Endothelial cell of umbilical vein (primary cell): ENCODE measurements at regions of chr18 and their contacts with region 1.

Region 1: DNA sequence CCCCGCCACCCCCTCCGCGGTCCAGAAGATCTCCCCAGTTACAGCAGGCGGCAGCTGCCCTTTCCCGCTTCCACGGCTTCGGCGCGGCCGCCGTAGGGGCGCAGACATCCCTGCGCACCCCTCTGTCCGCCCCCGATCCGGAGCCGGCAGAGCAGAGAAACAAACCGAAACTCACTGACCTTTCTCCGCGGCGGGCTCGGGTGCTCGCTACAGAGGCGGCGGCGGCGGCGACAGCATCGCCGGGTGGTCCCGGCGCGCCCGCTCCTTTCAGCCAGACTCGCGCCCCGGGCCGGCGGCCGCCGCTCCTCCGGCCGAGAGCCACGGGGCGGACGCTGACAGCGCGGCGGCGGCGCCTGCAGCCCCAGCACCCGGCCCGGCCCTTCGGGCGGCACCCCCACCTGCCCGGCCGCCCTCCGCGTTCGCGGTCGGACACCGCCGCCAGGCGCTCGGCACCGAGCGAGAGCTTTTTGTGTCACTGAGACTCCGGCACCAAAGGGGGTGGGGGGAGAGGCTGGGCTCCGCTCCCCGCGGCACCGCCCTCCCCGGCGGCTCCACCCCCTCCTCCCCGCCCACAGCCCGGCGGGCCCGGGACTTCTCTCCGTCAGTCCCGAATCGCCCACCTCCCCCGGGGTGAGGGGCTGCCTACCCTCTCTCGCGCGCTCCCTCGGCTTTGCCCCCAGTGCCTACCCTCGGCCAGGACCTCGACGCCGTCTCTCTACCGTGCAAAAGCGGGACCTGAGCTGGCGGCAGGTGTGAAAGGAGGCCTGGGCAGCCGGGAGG is 1.4 kb upstream of the RNF152 start:
- DNase-seq: peak; percentile 82
- H3K4me3 ChIP-seq: peak overlapping the region; percentile 83 to 98 (median 87)
- H3K27ac ChIP-seq: peak overlapping the region; percentile 67
- H3K4me1 ChIP-seq: peaks cover 21% of the 10 kb centered on the region
- H3K27me3 ChIP-seq: no peaks in the 10 kb centered on the region
- CTCF ChIP-seq: peak in 1 of 2 donors; percentile 44
- POLR2A ChIP-seq: peak; percentile 82

Region 2: GRCh38 chr18:61551586-61551985 is 342.6 kb before region 1 on chr18:
- CTCF ChIA-PET with region 1: interaction called, 10 read pairs
- POLR2A ChIA-PET with region 1: no interaction called
- dilution Hi-C with region 1: no loop called
- intact Hi-C with region 1: loop called (anchors 1 kb)
- DNase-seq: peak; percentile 88
- H3K4me3 ChIP-seq: no peak overlapping the region
- H3K27ac ChIP-seq: no peak overlapping the region
- H3K4me1 ChIP-seq: no peaks in the 10 kb centered on the region
- H3K27me3 ChIP-seq: no peaks in the 10 kb centered on the region
- CTCF ChIP-seq: peak; percentile 72 to 79
- POLR2A ChIP-seq: no peak

Region 3: DNA sequence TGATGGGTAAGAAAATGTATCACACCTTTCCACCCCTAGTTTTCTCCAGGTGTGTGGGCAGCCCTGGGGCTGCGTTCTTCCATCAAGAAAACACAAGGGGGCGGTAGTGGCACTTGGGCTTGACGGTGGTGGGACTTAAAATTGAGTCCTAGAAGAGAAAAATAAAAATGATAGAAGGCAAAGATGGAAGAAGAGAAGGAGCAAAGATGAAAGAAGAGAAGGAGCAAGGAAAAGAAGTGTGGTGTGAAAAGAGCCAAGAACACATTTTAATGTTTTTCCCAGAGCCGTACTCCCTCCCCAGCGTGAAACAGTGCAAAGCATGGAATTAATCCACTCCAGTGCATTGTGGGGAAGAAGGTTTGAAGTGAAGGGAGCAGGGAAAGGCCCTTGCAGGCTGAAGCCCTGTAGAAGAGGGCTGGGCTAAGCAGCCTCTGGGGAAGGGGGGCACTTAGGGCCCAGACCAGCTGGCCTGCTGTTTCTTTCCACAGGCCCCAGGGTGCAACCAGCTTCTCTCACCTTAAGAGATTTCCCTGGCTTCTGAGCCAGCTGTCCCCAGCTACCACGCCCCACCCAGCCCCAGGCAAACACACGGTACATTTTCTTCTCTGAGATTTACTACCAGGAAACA is 258.1 kb before region 1 on chr18:
- CTCF ChIA-PET with region 1: interaction called, 54 read pairs
- POLR2A ChIA-PET with region 1: interaction called, 4 read pairs
- dilution Hi-C with region 1: no loop called
- intact Hi-C with region 1: loop called (anchors 1 kb)
- DNase-seq: peak; percentile 76
- H3K4me3 ChIP-seq: no peak overlapping the region
- H3K27ac ChIP-seq: no peak overlapping the region
- H3K4me1 ChIP-seq: peaks cover 4% of the 10 kb centered on the region
- H3K27me3 ChIP-seq: no peaks in the 10 kb centered on the region
- CTCF ChIP-seq: peak; percentile 82 to 88
- POLR2A ChIP-seq: no peak

Region 4: GRCh38 chr18:61702007-61702406 is 192.2 kb before region 1 on chr18:
- CTCF ChIA-PET with region 1: interaction called, 4 read pairs
- POLR2A ChIA-PET with region 1: no interaction called
- dilution Hi-C with region 1: no loop called
- intact Hi-C with region 1: loop called (anchors 1 kb)
- DNase-seq: peak; percentile 85
- H3K4me3 ChIP-seq: no peak overlapping the region
- H3K27ac ChIP-seq: peak overlapping the region; percentile 78
- H3K4me1 ChIP-seq: peaks cover 24% of the 10 kb centered on the region
- H3K27me3 ChIP-seq: no peaks in the 10 kb centered on the region
- CTCF ChIP-seq: no peak
- POLR2A ChIP-seq: no peak

Region 5: GRCh38 chr18:61882296-61883004 is 11.7 kb before region 1 on chr18:
- CTCF ChIA-PET with region 1: interaction called, 14 read pairs
- POLR2A ChIA-PET with region 1: no interaction called
- dilution Hi-C with region 1: no loop called
- intact Hi-C with region 1: no loop called
- DNase-seq: no peak
- H3K4me3 ChIP-seq: no peak overlapping the region
- H3K27ac ChIP-seq: no peak overlapping the region
- H3K4me1 ChIP-seq: no peaks in the 10 kb centered on the region
- H3K27me3 ChIP-seq: no peaks in the 10 kb centered on the region
- CTCF ChIP-seq: no peak
- POLR2A ChIP-seq: no peak

Region 6: GRCh38 chr18:62105376-62105775 is 211.2 kb after region 1 on chr18:
- CTCF ChIA-PET with region 1: no interaction called
- POLR2A ChIA-PET with region 1: interaction called, 5 read pairs
- dilution Hi-C with region 1: no loop called
- intact Hi-C with region 1: loop called (anchors 5 kb)
- DNase-seq: peak; percentile 64
- H3K4me3 ChIP-seq: no peak overlapping the region
- H3K27ac ChIP-seq: no peak overlapping the region
- H3K4me1 ChIP-seq: peaks cover 25% of the 10 kb centered on the region
- H3K27me3 ChIP-seq: no peaks in the 10 kb centered on the region
- CTCF ChIP-seq: no peak
- POLR2A ChIP-seq: no peak

Region 7: GRCh38 chr18:62486304-62486964 is 592.3 kb after region 1 on chr18:
- CTCF ChIA-PET with region 1: no interaction called
- POLR2A ChIA-PET with region 1: no interaction called
- dilution Hi-C with region 1: no loop called
- intact Hi-C with region 1: no loop called
- DNase-seq: peak; percentile 60
- H3K4me3 ChIP-seq: peak overlapping the region in 1 of 3 experiments; percentile 5
- H3K27ac ChIP-seq: peak overlapping the region; percentile 65
- H3K4me1 ChIP-seq: peaks cover 23% of the 10 kb centered on the region
- H3K27me3 ChIP-seq: no peaks in the 10 kb centered on the region
- CTCF ChIP-seq: no peak
- POLR2A ChIP-seq: no peak